HCT116 (cell line): ENCODE measurements at regions of chr18 and their contacts with region 1.

Region 1: GRCh38 chr18:40423291-40423690 is 1531.7 kb upstream of the PIK3C3 start:
- DNase-seq: no peak
- ATAC-seq: no peak
- H3K4me3 ChIP-seq: no peak overlapping the region
- H3K27ac ChIP-seq: no peak overlapping the region
- H3K4me1 ChIP-seq: no peaks in the 10 kb centered on the region
- H3K27me3 ChIP-seq: no peaks in the 10 kb centered on the region
- CTCF ChIP-seq: no peak
- POLR2A ChIP-seq: no peak
- RAD21 ChIP-seq: no peak

Region 2: GRCh38 chr18:40186677-40187076 is 236.6 kb before region 1 on chr18:
- CTCF ChIA-PET with region 1: no interaction called
- POLR2A ChIA-PET with region 1: no interaction called
- RAD21 ChIA-PET with region 1: no interaction called
- intact Hi-C with region 1: loop called (anchors 5 kb)
- DNase-seq: no peak
- ATAC-seq: no peak
- H3K4me3 ChIP-seq: no peak overlapping the region
- H3K27ac ChIP-seq: no peak overlapping the region
- H3K4me1 ChIP-seq: no peaks in the 10 kb centered on the region
- H3K27me3 ChIP-seq: no peaks in the 10 kb centered on the region; the same call in 1 of the 2 replicates
- CTCF ChIP-seq: no peak
- POLR2A ChIP-seq: no peak
- RAD21 ChIP-seq: no peak

Region 3: GRCh38 chr18:40413160-40413559 is 10.1 kb before region 1 on chr18:
- CTCF ChIA-PET with region 1: no interaction called
- POLR2A ChIA-PET with region 1: no interaction called
- RAD21 ChIA-PET with region 1: no interaction called
- intact Hi-C with region 1: no loop called
- DNase-seq: no peak
- ATAC-seq: no peak
- H3K4me3 ChIP-seq: no peak overlapping the region
- H3K27ac ChIP-seq: no peak overlapping the region
- H3K4me1 ChIP-seq: no peaks in the 10 kb centered on the region
- H3K27me3 ChIP-seq: no peaks in the 10 kb centered on the region
- CTCF ChIP-seq: no peak; a peak in 1 of 6 replicates
- POLR2A ChIP-seq: no peak
- RAD21 ChIP-seq: peak; percentile 27; the same call in 1 of the 2 replicates